Mammary epithelial cell (primary cell): ENCODE measurements at regions of chr20 and their contacts with region 1.

Region 1: GRCh38 chr20:944774-945410 is 28.8 kb upstream of the ANGPT4 start:
- DNase-seq: no peak
- H3K4me3 ChIP-seq: no peak overlapping the region
- H3K27ac ChIP-seq: no peak overlapping the region
- H3K4me1 ChIP-seq: no peaks in the 10 kb centered on the region
- H3K27me3 ChIP-seq: peaks cover 4% of the 10 kb centered on the region
- CTCF ChIP-seq: no peak

Region 2: GRCh38 chr20:825710-826421 is 119.0 kb before region 1 on chr20:
- CTCF ChIA-PET with region 1: no interaction called
- dilution Hi-C with region 1: loop called (anchors 5 kb)
- in situ Hi-C with region 1: no loop called
- intact Hi-C with region 1: no loop called
- DNase-seq: no peak
- H3K4me3 ChIP-seq: no peak overlapping the region
- H3K27ac ChIP-seq: no peak overlapping the region
- H3K4me1 ChIP-seq: no peaks in the 10 kb centered on the region
- H3K27me3 ChIP-seq: no peaks in the 10 kb centered on the region
- CTCF ChIP-seq: no peak

Region 3: DNA sequence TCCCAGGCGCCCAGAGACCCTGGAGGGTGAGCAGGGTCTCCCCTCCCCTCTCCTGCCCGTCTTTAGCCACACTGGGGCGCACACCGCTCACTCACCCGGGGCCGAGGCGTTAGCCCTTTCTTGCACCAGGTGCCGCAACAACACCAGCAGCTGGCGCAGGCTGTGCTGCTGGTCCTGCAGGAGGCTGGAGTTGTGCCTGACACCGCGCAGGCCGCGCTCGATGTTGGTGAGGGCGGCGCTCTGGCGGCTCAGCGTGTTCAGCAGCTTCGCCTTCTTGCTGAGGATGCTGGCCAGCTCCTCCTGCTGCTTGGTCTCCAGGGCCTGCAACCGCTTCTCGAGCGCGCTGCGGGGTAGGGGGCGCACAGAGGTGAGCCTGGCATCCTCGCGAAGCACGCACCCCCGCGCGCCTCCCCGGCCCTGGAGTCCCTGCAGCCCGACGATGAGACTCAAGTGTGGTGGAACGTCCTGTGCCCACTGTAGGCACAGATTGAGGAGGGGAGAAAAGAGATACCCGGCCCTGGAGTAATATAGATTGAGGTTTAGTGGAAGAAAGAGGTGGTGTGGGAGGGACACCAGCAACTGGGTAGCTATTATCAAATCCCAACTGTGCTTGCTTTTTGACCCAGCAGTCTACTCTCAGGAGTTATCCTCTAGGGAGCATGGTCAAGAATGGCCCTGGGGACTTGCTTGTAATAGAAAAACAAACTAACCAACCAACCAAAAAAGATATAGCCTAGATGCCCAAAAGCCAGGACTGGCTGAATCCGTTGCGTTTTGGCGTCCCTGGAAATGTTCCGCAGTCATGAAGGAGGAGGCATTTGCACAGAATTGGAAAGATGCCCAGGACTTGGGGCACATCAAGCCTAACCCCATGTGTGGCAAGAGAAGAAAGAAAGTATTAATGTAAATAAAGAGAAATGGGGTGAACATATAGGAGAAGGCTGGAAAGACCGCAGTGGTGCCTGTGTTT is 59.6 kb before region 1 on chr20:
- CTCF ChIA-PET with region 1: no interaction called
- dilution Hi-C with region 1: loop called (anchors 5 kb)
- in situ Hi-C with region 1: no loop called
- intact Hi-C with region 1: no loop called
- DNase-seq: peak; percentile 16
- H3K4me3 ChIP-seq: no peak overlapping the region
- H3K27ac ChIP-seq: no peak overlapping the region
- H3K4me1 ChIP-seq: peaks cover 17% of the 10 kb centered on the region
- H3K27me3 ChIP-seq: no peaks in the 10 kb centered on the region
- CTCF ChIP-seq: peak in 1 of 2 donors; percentile 23

Region 4: GRCh38 chr20:986733-987355 is 42.0 kb after region 1 on chr20:
- CTCF ChIA-PET with region 1: no interaction called
- dilution Hi-C with region 1: no loop called
- in situ Hi-C with region 1: no loop called
- intact Hi-C with region 1: no loop called
- DNase-seq: peak; percentile 30
- H3K4me3 ChIP-seq: no peak overlapping the region
- H3K27ac ChIP-seq: no peak overlapping the region
- H3K4me1 ChIP-seq: no peaks in the 10 kb centered on the region
- H3K27me3 ChIP-seq: no peaks in the 10 kb centered on the region
- CTCF ChIP-seq: no peak

Region 5: GRCh38 chr20:1392823-1393506 is 448.1 kb after region 1 on chr20 and contains the start of gene FKBP1A:
- CTCF ChIA-PET with region 1: no interaction called
- dilution Hi-C with region 1: no loop called
- in situ Hi-C with region 1: no loop called
- intact Hi-C with region 1: no loop called
- DNase-seq: peak; percentile 92
- H3K4me3 ChIP-seq: peak within 1 kb of the TSS; percentile 57 to 84 (median 76)
- H3K27ac ChIP-seq: peak within 1 kb of the TSS; percentile 57
- H3K4me1 ChIP-seq: peaks cover 43% of the 10 kb centered on the region
- H3K27me3 ChIP-seq: no peaks in the 10 kb centered on the region
- CTCF ChIP-seq: no peak
- total RNA-seq, gene FKBP1A: 139 to 425 TPM